ENCODE measurements at regions of chr12 and their contacts with region 1.

Region 1: GRCh38 chr12:26937875-26938700 is at the starts of genes FGFR1OP2 and INTS13:
- DNase-seq: peak; percentile 99
- H3K4me3 Mint-ChIP-seq: peak within 1 kb of the TSS; percentile 94
- H3K27ac Mint-ChIP-seq: peak within 1 kb of the TSS; percentile 97
- H3K4me1 Mint-ChIP-seq: peaks cover 55% of the 10 kb centered on the region
- H3K27me3 Mint-ChIP-seq: no peaks in the 10 kb centered on the region
- total RNA-seq, gene FGFR1OP2: 45.7 and 46.7 TPM in 2 replicates
- total RNA-seq, gene INTS13: 49.7 and 51.3 TPM in 2 replicates

Region 2: GRCh38 chr12:26867080-26867479 is 71.0 kb before region 1 on chr12:
- intact Hi-C with region 1: loop called (anchors 2 kb)
- DNase-seq: no peak
- H3K4me3 Mint-ChIP-seq: peak overlapping the region; percentile 45
- H3K27ac Mint-ChIP-seq: peak overlapping the region; percentile 12
- H3K4me1 Mint-ChIP-seq: peaks cover 25% of the 10 kb centered on the region
- H3K27me3 Mint-ChIP-seq: peaks cover 2% of the 10 kb centered on the region

Region 3: DNA sequence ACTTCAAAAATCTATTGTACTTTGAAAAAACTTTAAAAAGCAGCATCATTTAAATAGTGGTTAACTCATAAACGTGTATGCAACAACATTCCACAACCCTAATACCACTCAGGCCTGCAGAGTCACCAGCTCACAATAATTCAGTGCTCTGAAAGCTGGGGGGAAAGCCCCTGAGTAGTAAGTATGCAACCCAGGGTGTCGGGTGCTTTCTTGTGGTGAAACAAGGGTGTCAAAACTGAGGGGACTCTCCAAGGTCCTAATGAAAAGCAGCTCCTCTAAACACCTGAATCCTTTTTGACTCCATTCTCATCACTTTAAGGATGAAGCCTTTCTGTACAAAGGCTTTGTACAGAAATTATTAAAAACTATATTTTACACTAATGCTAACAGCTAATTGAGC is 33.9 kb after region 1 on chr12:
- intact Hi-C with region 1: loop called (anchors 1 kb)
- DNase-seq: peak; percentile 86
- H3K4me3 Mint-ChIP-seq: no peak overlapping the region
- H3K27ac Mint-ChIP-seq: peak overlapping the region; percentile 21
- H3K4me1 Mint-ChIP-seq: peaks cover 16% of the 10 kb centered on the region
- H3K27me3 Mint-ChIP-seq: no peaks in the 10 kb centered on the region

Region 4: DNA sequence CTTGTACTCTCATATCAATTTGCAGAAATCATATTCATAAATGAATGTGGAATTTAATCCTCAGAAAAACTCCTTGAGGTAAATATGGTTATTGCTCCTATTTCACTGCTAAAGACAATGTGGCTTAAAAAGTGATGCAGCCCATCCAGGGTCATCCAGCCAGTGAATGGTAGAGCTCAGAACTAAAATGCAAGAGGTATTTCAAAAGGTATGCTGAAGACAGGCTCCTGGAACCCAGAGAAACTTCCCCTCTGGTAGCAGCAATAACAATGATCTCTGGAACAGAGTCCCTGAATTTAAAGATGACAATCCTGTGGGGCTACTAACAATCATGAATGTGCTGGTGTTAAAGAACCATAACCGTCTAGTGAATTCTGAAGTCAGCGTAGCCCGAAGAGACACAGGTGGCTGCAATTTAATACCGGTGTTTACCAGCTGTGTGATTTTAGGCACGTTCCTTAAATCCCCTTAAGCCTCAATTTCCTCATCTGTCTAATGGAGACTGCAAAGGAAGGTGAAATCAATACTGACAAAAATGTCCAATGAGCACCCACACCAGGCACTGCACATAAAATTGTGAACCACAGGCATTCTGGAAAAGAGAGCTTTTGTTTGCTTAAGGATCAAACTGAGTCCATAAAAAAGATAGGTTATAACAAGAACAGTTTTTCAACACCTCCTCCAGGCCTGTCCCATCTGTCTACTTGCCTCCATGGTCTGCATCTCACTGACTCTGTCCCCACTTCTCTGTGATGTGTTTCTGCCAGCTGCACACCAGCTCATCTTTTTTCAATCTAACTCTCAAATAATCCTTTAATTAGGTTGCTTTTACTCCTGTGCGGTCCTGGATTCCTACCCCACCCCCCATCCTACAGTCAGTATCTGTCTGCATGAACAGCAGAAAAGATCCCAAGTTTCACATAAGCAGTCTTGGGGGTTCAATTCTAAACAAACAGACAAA is 65.6 kb after region 1 on chr12:
- intact Hi-C with region 1: no loop called
- DNase-seq: no peak
- H3K4me3 Mint-ChIP-seq: no peak overlapping the region
- H3K27ac Mint-ChIP-seq: no peak overlapping the region
- H3K4me1 Mint-ChIP-seq: peaks cover 17% of the 10 kb centered on the region
- H3K27me3 Mint-ChIP-seq: no peaks in the 10 kb centered on the region

Region 5: GRCh38 chr12:27710592-27711316 is 772.7 kb after region 1 on chr12 and contains the start of gene MRPS35:
- intact Hi-C with region 1: loop called (anchors 1 kb)
- DNase-seq: peak; percentile 98
- H3K4me3 Mint-ChIP-seq: peak within 1 kb of the TSS; percentile 95
- H3K27ac Mint-ChIP-seq: peak within 1 kb of the TSS; percentile 91
- H3K4me1 Mint-ChIP-seq: peaks cover 31% of the 10 kb centered on the region
- H3K27me3 Mint-ChIP-seq: peaks cover 9% of the 10 kb centered on the region
- total RNA-seq, gene MRPS35: 57.7 and 58.1 TPM in 2 replicates